PC-3 (cell line): ENCODE measurements at regions of chr11 and their contacts with region 1.

Region 1: GRCh38 chr11:66787912-66788758 is 55.1 kb upstream of the RCE1 start:
- DNase-seq: peak; percentile 14
- ATAC-seq: no peak
- H3K4me3 ChIP-seq: no peak overlapping the region
- H3K27ac ChIP-seq: peak overlapping the region; percentile 74
- H3K4me1 ChIP-seq: peaks cover 38% of the 10 kb centered on the region
- H3K27me3 ChIP-seq: no peaks in the 10 kb centered on the region
- CTCF ChIP-seq: no peak

Region 2: GRCh38 chr11:66638177-66639065 is 149.7 kb before region 1 on chr11 and contains the start of gene RBM4:
- CTCF ChIA-PET with region 1: no interaction called
- POLR2A ChIA-PET with region 1: no interaction called
- intact Hi-C with region 1: no loop called
- DNase-seq: peak; percentile 100
- ATAC-seq: peak; percentile 93
- H3K4me3 ChIP-seq: peak within 1 kb of the TSS; percentile 95
- H3K27ac ChIP-seq: peak within 1 kb of the TSS; percentile 73
- H3K4me1 ChIP-seq: peaks cover 43% of the 10 kb centered on the region
- H3K27me3 ChIP-seq: no peaks in the 10 kb centered on the region
- CTCF ChIP-seq: no peak; the same call in 1 of the 2 replicates
- total RNA-seq, gene RBM4: 152 and 164 TPM in 2 replicates

Region 3: GRCh38 chr11:66815646-66816045 is 27.5 kb after region 1 on chr11:
- CTCF ChIA-PET with region 1: no interaction called
- POLR2A ChIA-PET with region 1: interaction called, 3 read pairs
- intact Hi-C with region 1: loop called (anchors 2 kb)
- DNase-seq: peak; percentile 93
- ATAC-seq: peak; percentile 91
- H3K4me3 ChIP-seq: peak overlapping the region; percentile 40; the same call in 1 of the 2 replicates
- H3K27ac ChIP-seq: peak overlapping the region; percentile 87
- H3K4me1 ChIP-seq: peaks cover 35% of the 10 kb centered on the region
- H3K27me3 ChIP-seq: no peaks in the 10 kb centered on the region
- CTCF ChIP-seq: no peak